ENCODE measurements at regions of chr17 and their contacts with region 1.

Region 1: GRCh38 chr17:5078106-5079028 is at the start of gene ZFP3:
- DNase-seq: peak; percentile 88
- H3K4me3 Mint-ChIP-seq: peak within 1 kb of the TSS; percentile 70
- H3K27ac Mint-ChIP-seq: peak within 1 kb of the TSS; percentile 87
- H3K4me1 Mint-ChIP-seq: peaks cover 25% of the 10 kb centered on the region
- H3K27me3 Mint-ChIP-seq: no peaks in the 10 kb centered on the region
- total RNA-seq, gene ZFP3: 1.8 to 1.9 TPM

Region 2: GRCh38 chr17:4920351-4921048 is 157.9 kb before region 1 on chr17:
- CTCF ChIA-PET with region 1: no interaction called
- POLR2A ChIA-PET with region 1: no interaction called
- intact Hi-C with region 1: no loop called
- DNase-seq: no peak
- H3K4me3 Mint-ChIP-seq: no peak overlapping the region
- H3K27ac Mint-ChIP-seq: no peak overlapping the region
- H3K4me1 Mint-ChIP-seq: no peaks in the 10 kb centered on the region
- H3K27me3 Mint-ChIP-seq: no peaks in the 10 kb centered on the region

Region 3: GRCh38 chr17:5042157-5043022 is 36.0 kb before region 1 on chr17:
- CTCF ChIA-PET with region 1: no interaction called
- POLR2A ChIA-PET with region 1: no interaction called
- intact Hi-C with region 1: no loop called
- DNase-seq: peak; percentile 65
- H3K4me3 Mint-ChIP-seq: peak overlapping the region; percentile 67
- H3K27ac Mint-ChIP-seq: peak overlapping the region; percentile 78
- H3K4me1 Mint-ChIP-seq: peaks cover 43% of the 10 kb centered on the region
- H3K27me3 Mint-ChIP-seq: no peaks in the 10 kb centered on the region

Region 4: GRCh38 chr17:5055543-5055942 is 22.8 kb before region 1 on chr17:
- CTCF ChIA-PET with region 1: interaction called, 22 read pairs
- POLR2A ChIA-PET with region 1: no interaction called
- intact Hi-C with region 1: no loop called
- DNase-seq: no peak
- H3K4me3 Mint-ChIP-seq: no peak overlapping the region
- H3K27ac Mint-ChIP-seq: no peak overlapping the region
- H3K4me1 Mint-ChIP-seq: no peaks in the 10 kb centered on the region
- H3K27me3 Mint-ChIP-seq: no peaks in the 10 kb centered on the region